ENCODE measurements at regions of chr6 and their contacts with region 1.

Region 1: GRCh38 chr6:40894962-40895799 is 143.8 kb downstream of the UNC5CL start:
- DNase-seq: peak; percentile 58 to 84 (median 68)
- ATAC-seq: peak; percentile 91 to 93 (median 91)
- H3K4me3 ChIP-seq: no peak overlapping the region
- H3K27ac ChIP-seq: peak overlapping the region in 1 of 4 donors; percentile 1
- H3K4me1 ChIP-seq: peaks cover 12 to 17% (median 15%) of the 10 kb centered on the region in 3 donors
- H3K27me3 ChIP-seq: no peaks in the 10 kb centered on the region
- CTCF ChIP-seq: peak; percentile 19 to 57 (median 40)

Region 2: GRCh38 chr6:40545954-40546353 is 349.2 kb before region 1 on chr6:
- intact Hi-C with region 1: no loop called
- DNase-seq: no peak
- ATAC-seq: no peak
- H3K4me3 ChIP-seq: no peak overlapping the region
- H3K27ac ChIP-seq: no peak overlapping the region
- H3K4me1 ChIP-seq: no peaks in the 10 kb centered on the region
- H3K27me3 ChIP-seq: no peaks in the 10 kb centered on the region
- CTCF ChIP-seq: no peak

Region 3: DNA sequence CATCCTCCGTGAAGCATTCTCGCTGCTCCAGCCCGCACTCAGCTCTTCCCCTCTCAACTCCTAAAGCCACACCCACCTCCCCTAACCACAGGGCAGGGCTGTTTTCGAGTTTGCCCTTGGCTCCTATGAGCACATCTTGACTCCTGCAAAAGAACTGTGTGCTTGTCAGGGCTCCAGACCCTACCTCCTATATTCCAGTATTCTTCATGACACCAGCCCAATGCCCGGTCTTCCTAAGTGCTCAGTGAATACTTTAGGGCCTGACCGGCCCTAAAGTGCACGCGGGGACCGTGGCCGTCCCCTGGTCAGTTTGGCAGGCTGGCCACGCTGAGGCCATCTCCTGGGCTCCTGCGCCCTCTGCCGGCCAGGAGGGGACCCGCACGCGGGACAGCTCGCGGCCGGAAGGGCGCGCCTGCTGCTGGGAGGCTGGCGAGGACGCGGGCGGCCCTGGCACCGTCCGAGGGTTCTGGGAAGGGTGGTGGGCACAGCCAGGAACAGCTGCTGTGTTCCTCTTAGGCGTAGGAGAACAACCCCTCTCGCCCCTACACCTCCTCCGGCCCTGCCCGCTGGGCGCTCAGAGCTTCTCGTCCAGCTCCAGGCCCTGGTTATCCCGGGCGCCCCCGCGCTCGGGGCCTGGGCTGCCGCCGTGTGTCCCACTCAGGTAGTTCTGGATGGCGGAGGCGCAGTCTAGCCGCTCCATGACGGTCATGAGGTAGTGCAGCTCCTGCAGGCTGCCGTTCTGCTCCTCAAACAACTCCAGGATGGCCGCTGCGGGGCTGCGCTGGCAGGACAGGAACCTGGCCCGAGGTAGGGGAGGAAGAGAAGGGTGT is 132.8 kb after region 1 on chr6:
- intact Hi-C with region 1: loop called (anchors 10 kb)
- DNase-seq: peak; percentile 80 to 99 (median 92)
- ATAC-seq: peak; percentile 93 to 97 (median 96)
- H3K4me3 ChIP-seq: peak overlapping the region; percentile 29 to 51 (median 40)
- H3K27ac ChIP-seq: peak overlapping the region; percentile 83 to 91 (median 86)
- H3K4me1 ChIP-seq: peaks cover 0 to 24% (median 6%) of the 10 kb centered on the region in 3 donors
- H3K27me3 ChIP-seq: no peaks in the 10 kb centered on the region
- CTCF ChIP-seq: peak; percentile 99

Region 4: DNA sequence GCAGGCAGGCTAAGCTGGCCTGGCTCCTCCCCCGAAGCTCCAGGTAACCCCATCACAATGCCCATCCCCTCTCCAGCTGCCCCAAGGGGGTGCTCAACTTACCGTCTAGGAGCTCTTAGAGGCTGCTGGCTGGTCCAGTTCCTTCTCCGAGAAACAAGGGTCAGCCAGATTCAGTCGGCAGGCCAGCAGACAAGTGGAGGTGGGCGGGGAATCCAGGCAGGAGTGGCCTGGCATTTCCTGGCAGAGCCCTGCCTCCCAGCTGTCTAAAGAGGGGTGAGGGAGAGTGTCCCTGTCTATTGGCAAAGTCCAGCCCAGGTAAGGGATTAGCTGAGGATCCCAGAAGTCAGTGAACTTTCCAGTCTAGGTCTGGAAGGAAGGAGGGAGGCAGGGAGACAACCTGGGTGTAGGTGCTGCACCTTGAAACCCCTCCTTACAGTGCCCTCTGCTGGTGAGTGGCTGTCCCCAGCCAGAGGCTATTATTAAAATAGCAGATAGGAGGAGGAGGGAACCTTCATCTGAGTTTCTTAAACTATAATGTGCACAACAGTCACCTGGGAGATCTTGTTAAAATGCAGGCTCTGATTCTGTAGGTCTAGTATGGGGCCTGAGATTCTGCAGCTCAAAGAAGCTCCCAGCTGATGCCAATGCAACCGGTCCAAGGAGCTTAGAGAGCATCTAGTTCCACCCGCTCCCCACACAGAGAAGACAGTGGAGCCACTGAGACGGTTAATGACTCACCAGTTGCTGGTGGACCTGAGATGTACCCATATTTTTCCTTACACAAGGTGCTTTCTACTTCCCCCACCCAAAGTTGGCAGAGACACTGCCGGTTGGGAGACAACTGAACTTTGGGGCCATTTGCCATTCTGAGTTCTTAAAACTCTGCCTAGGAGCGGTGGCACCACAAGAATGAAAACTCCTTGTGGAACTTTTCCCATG is 144.1 kb after region 1 on chr6 and contains the start of gene UNC5CL:
- intact Hi-C with region 1: loop called in 1 of 3 experiments (anchors 10 kb)
- DNase-seq: peak in 5 of 6 donors; percentile 78 to 87 (median 80)
- ATAC-seq: peak; percentile 72 to 79 (median 78)
- H3K4me3 ChIP-seq: peak within 1 kb of the TSS in 3 of 4 donors; percentile 31 to 69 (median 34)
- H3K27ac ChIP-seq: peak within 1 kb of the TSS; percentile 62 to 90 (median 81)
- H3K4me1 ChIP-seq: peaks cover 31 to 45% (median 37%) of the 10 kb centered on the region in 3 donors
- H3K27me3 ChIP-seq: no peaks in the 10 kb centered on the region
- CTCF ChIP-seq: peak; percentile 69 to 77 (median 72)
- total RNA-seq, gene UNC5CL: 7.2 to 37.6 (median 12.0) TPM

Region 5: GRCh38 chr6:41071923-41072675 is 176.9 kb after region 1 on chr6 and contains the start of gene OARD1:
- intact Hi-C with region 1: no loop called
- DNase-seq: peak; percentile 99 to 100 (median 100)
- ATAC-seq: peak; percentile 70 to 82 (median 72)
- H3K4me3 ChIP-seq: peak within 1 kb of the TSS; percentile 89 to 98 (median 94)
- H3K27ac ChIP-seq: peak within 1 kb of the TSS; percentile 98 to 100 (median 99)
- H3K4me1 ChIP-seq: peaks cover under 1 to 36% (median 28%) of the 10 kb centered on the region in 3 donors
- H3K27me3 ChIP-seq: no peaks in the 10 kb centered on the region
- CTCF ChIP-seq: no peak
- total RNA-seq, gene OARD1: 16.0 to 26.9 (median 20.6) TPM